ENCODE measurements at regions of chrX and their contacts with region 1.

Region 1: DNA sequence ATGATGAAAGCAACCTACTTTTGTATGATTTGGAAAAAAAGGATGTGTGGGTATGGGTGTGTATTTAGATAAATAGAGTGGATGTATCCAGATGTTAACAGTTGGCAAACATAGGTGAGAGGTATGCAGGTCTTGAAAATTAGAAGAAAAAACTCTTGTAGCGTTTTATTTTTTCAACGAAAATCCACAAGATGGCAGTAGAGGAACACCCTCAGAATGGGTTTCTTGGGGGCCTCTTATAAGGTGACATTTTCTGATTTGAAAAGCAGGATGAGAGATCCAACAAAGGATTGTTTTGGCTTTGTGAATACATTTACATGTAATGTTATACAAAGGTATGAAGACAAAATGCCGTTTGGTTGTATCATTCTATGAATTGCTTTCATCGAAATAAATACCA is 68.3 kb downstream of the FMR1NB start:
- DNase-seq: peak; percentile 36
- H3K4me3 ChIP-seq: no peak overlapping the region
- H3K27ac ChIP-seq: no peak overlapping the region
- H3K4me1 ChIP-seq: no peaks in the 10 kb centered on the region
- H3K27me3 ChIP-seq: no peaks in the 10 kb centered on the region
- CTCF ChIP-seq: peak in 1 of 2 donors; percentile 10
- POLR2A ChIP-seq: no peak

Region 2: DNA sequence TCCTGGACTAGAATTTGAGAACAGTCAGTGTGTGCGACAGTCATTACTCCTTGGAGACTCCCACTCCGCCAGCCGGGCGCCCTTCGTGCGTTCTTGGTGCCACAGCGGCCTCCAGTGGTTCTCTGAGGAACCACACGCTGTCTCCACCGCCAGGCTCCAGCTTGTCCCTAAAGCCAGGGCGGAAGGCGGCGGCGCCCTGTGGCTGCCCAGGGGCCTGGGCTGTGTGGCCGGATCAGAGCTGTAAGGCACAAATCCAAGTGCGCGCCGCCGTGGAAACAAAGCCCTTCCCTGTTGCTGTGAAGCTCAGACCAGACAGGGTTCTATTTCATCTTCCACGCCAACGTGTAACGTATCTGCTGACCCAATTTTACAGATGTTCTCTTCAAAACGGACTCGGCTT is 1421.5 kb after region 1 on chrX:
- CTCF ChIA-PET with region 1: interaction called, 12 read pairs
- POLR2A ChIA-PET with region 1: no interaction called
- dilution Hi-C with region 1: no loop called
- intact Hi-C with region 1: loop called (anchors 1 kb)
- DNase-seq: peak; percentile 67
- H3K4me3 ChIP-seq: no peak overlapping the region
- H3K27ac ChIP-seq: no peak overlapping the region
- H3K4me1 ChIP-seq: peaks cover 5% of the 10 kb centered on the region
- H3K27me3 ChIP-seq: no peaks in the 10 kb centered on the region
- CTCF ChIP-seq: peak; percentile 72 to 75
- POLR2A ChIP-seq: no peak

Measured in endothelial cell of umbilical vein (primary cell).